Activated T-helper 1 cell treated with anti-CD3 and anti-CD28 coated beads, Interleukin-12 subunit alpha, Interleukin-12 subunit beta, Interleukin-2, Interleukin-4 antibody, amounts not matched to agents 30 ng/mL and 10 ng/mL and 1 ng/mL, durations not matched to agents 14 hours and 24 hours and 36 hours (primary cell): ENCODE measurements at regions of chr17 and their contacts with region 1.

Region 1: GRCh38 chr17:58082870-58083490 is at the start of gene DYNLL2:
- DNase-seq: peak; percentile 84
- H3K4me3 Mint-ChIP-seq: peak within 1 kb of the TSS; percentile 90
- H3K27ac Mint-ChIP-seq: peak within 1 kb of the TSS; percentile 78
- H3K4me1 Mint-ChIP-seq: peaks cover 32% of the 10 kb centered on the region
- H3K27me3 Mint-ChIP-seq: peaks cover 25% of the 10 kb centered on the region
- total RNA-seq, gene DYNLL2: 35.8 and 37.6 TPM in 2 replicates

Region 2: GRCh38 chr17:57084802-57085447 is 998.1 kb before region 1 on chr17 and contains the start of gene AKAP1:
- intact Hi-C with region 1: loop called (anchors 2 kb)
- DNase-seq: peak; percentile 96
- H3K4me3 Mint-ChIP-seq: peak within 1 kb of the TSS; percentile 92
- H3K27ac Mint-ChIP-seq: peak within 1 kb of the TSS; percentile 87
- H3K4me1 Mint-ChIP-seq: peaks cover 28% of the 10 kb centered on the region
- H3K27me3 Mint-ChIP-seq: peaks cover 9% of the 10 kb centered on the region
- total RNA-seq, gene AKAP1: 53.8 and 59.9 TPM in 2 replicates

Region 3: DNA sequence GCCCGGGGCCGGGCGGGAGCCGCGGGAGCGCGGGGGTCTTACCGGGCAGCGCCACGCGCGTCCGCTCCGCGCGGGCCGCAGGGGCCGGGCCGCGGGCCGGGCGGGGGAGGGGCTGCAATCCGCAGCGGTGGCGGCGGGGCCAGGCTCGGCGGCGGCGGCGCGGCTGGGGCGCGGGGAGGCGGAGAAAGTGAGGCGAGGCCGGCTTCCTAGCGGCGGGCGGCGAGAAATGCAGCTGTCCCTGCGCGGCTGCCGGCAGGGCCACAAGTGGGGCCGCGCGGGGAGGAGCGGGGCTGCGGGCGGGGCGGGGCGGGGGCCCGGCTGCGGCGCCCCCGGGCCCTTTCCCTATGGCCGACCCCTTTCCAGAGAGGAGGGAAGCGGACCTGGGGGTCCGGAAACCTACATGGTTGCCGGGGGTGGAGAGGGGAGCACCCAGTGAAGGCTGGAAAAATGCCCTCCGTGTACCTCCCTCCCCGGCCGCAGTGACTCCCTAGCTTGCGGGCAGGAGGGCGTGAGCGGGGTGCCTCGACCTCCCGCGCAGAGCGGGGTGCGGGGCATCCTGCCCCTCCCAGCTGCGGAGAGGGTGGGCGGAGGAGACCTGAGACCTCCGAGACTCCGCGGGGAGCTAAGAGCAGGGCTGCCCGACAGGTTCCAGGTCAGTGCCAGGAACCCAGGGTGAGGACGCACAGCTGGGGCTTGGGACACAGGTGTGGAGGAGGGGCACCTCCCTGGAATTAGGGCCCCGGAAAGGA is 127.6 kb before region 1 on chr17 and contains the start of gene CUEDC1:
- intact Hi-C with region 1: loop called (anchors 5 kb)
- DNase-seq: peak; percentile 59
- H3K4me3 Mint-ChIP-seq: peak within 1 kb of the TSS; percentile 45
- H3K27ac Mint-ChIP-seq: no peak within 1 kb of the TSS
- H3K4me1 Mint-ChIP-seq: peaks cover 28% of the 10 kb centered on the region
- H3K27me3 Mint-ChIP-seq: peaks cover 55% of the 10 kb centered on the region
- total RNA-seq, gene CUEDC1: 0.37 TPM in 1 of 2 replicates, not detected in the other

Region 4: DNA sequence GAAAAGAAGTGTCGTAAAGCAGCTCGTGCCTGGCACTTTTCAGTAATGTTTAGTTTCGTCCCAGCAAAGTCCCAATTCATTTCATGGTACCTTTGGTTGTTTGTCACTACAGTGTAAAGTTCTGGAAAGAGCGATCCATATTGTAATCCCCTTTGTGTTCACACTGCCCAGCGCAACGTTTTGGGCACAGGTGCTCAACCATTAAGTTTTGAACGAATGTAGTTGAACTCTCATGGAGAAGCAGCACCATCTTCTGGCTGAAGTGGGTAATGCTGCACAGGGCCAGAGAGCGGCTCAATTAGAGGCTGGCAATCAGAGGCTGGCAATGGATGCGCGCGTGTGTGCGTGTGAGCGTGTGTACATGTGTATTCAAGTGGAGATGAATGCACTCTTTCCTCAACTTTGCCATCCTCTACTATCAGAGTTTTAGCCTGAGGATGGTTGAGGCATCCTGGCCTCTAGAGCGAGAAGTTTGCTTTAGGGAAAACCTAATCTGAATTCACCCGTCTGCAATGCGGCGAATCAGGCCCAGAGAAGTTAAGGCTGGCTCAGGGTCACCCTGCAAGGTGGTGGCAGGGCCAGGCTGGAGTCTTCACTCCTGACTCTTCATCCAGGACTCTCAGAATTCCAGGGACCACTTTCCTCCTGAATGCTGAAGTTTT is 30.1 kb after region 1 on chr17:
- intact Hi-C with region 1: loop called (anchors 1 kb)
- DNase-seq: peak; percentile 70
- H3K4me3 Mint-ChIP-seq: no peak overlapping the region
- H3K27ac Mint-ChIP-seq: no peak overlapping the region
- H3K4me1 Mint-ChIP-seq: peaks cover 6% of the 10 kb centered on the region
- H3K27me3 Mint-ChIP-seq: peaks cover 11% of the 10 kb centered on the region

Region 5: GRCh38 chr17:58329035-58329809 is 246.2 kb after region 1 on chr17:
- intact Hi-C with region 1: loop called (anchors 2 kb)
- DNase-seq: peak; percentile 81
- H3K4me3 Mint-ChIP-seq: peak overlapping the region; percentile 100
- H3K27ac Mint-ChIP-seq: peak overlapping the region; percentile 93
- H3K4me1 Mint-ChIP-seq: peaks cover 45% of the 10 kb centered on the region
- H3K27me3 Mint-ChIP-seq: peaks cover 2% of the 10 kb centered on the region